ENCODE measurements at regions of chr3 and their contacts with region 1.

Region 1: GRCh38 chr3:154243353-154243752 is 80.9 kb downstream of the DHX36 start:
- DNase-seq: no peak
- ATAC-seq: peak; percentile 77
- H3K4me3 ChIP-seq: no peak overlapping the region
- H3K27ac ChIP-seq: no peak overlapping the region
- H3K4me1 ChIP-seq: no peaks in the 10 kb centered on the region
- H3K27me3 ChIP-seq: no peaks in the 10 kb centered on the region

Region 2: GRCh38 chr3:154081305-154081704 is 162.0 kb before region 1 on chr3:
- intact Hi-C with region 1: no loop called
- DNase-seq: no peak
- ATAC-seq: no peak
- H3K4me3 ChIP-seq: no peak overlapping the region
- H3K27ac ChIP-seq: no peak overlapping the region
- H3K4me1 ChIP-seq: no peaks in the 10 kb centered on the region
- H3K27me3 ChIP-seq: no peaks in the 10 kb centered on the region

Region 3: GRCh38 chr3:154102225-154102624 is 141.1 kb before region 1 on chr3:
- intact Hi-C with region 1: loop called in 1 of 4 experiments (anchors 5 kb)
- DNase-seq: no peak
- ATAC-seq: no peak
- H3K4me3 ChIP-seq: no peak overlapping the region
- H3K27ac ChIP-seq: no peak overlapping the region
- H3K4me1 ChIP-seq: no peaks in the 10 kb centered on the region
- H3K27me3 ChIP-seq: no peaks in the 10 kb centered on the region

Region 4: DNA sequence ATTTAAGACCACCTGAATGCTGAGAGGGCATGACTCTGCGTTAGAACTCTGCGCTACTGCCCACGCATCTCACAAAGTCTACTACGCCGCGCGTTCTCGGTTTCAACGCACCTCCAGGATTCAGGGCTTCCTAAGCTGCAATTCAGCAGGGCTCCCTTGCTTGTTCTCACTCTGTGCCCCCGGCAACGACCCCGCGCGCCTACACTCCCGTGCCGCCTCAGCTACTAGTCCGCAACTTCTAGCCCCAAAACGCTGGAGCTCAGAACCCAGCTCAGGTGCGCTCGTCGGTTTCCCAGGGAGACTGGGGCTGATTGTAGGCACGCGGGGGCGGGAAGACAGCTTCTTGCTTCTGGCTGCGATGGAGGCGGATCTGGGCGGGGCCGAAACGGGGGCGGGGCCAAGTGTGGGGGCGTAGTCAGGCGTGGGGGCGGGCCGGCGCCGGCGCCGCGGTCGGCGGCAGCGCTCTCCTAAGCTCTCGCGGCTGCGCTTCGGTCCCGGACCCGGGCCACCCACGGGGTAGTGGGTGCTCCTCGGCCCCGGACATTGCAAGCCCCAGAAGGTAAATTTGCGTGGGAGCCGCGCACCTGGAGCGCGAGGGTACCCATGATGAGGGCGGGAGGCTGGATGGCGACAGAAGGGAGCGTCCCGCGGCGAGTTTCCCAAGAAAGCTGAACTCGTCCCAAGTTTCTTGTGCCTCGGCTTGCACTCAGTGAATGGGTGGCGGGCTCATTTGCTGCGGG is 122.2 kb before region 1 on chr3 and contains the start of gene ARHGEF26:
- intact Hi-C with region 1: loop called in 1 of 4 experiments (anchors 10 kb)
- DNase-seq: peak; percentile 87 to 95 (median 95)
- ATAC-seq: peak; percentile 97 to 98
- H3K4me3 ChIP-seq: peak within 1 kb of the TSS; percentile 63
- H3K27ac ChIP-seq: no peak within 1 kb of the TSS
- H3K4me1 ChIP-seq: no peaks in the 10 kb centered on the region
- H3K27me3 ChIP-seq: no peaks in the 10 kb centered on the region
- total RNA-seq, gene ARHGEF26: 3.3 to 7.5 (median 5.4) TPM

Measured in right cardiac atrium (tissue), 5 donors.